ENCODE measurements at regions of chr20 and their contacts with region 1.

Region 1: DNA sequence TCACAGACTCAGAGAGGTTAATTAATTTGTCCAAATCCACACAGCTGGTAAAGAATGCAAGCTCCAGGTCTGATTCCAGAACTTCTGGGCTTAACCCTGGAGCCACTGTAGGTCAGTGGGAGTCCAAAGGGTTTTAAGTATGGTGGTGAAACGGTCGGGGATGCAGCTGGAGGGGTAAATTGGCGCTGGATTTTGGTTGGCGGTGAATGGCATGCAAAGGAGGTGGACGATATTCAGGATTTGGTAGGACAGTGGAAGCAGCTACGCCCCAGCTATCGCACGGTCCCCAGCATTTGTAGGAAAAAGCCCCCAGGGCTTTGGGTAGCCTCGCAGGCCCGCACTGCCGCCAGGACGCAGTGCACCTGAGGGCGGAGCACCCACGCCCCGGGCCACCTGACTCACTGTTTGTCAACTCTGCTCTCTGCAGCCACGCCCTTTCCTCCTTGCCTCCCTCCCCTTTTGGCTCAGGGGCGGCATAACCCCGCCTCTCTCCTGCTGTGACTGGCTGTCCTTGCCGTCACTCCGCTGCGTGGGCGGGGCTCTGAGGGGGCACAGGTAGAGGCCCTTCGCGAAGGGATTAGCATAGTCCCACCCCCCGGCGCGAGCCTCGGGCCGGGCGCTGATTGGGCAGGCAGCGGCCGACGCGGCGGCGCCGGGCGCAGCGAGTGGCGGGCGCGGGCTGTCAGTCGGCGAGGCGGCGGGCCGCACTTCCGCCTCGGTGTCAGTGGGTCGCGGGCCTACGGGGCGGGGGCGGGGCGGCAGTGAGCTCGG is at the start of gene OSBPL2:
- DNase-seq: peak; percentile 100
- H3K4me3 Mint-ChIP-seq: peak within 1 kb of the TSS; percentile 78
- H3K27ac Mint-ChIP-seq: peak within 1 kb of the TSS; percentile 60
- H3K4me1 Mint-ChIP-seq: peaks cover 17% of the 10 kb centered on the region
- H3K27me3 Mint-ChIP-seq: no peaks in the 10 kb centered on the region
- total RNA-seq, gene OSBPL2: 29.3 and 29.9 TPM in 2 replicates

Region 2: GRCh38 chr20:62182613-62183425 is 55.2 kb before region 1 on chr20 and contains the start of gene MTG2:
- intact Hi-C with region 1: loop called (anchors 2 kb)
- DNase-seq: peak; percentile 93
- H3K4me3 Mint-ChIP-seq: peak within 1 kb of the TSS; percentile 91
- H3K27ac Mint-ChIP-seq: peak within 1 kb of the TSS; percentile 89
- H3K4me1 Mint-ChIP-seq: peaks cover 24% of the 10 kb centered on the region
- H3K27me3 Mint-ChIP-seq: no peaks in the 10 kb centered on the region
- total RNA-seq, gene MTG2: 34.0 and 40.2 TPM in 2 replicates

Region 3: DNA sequence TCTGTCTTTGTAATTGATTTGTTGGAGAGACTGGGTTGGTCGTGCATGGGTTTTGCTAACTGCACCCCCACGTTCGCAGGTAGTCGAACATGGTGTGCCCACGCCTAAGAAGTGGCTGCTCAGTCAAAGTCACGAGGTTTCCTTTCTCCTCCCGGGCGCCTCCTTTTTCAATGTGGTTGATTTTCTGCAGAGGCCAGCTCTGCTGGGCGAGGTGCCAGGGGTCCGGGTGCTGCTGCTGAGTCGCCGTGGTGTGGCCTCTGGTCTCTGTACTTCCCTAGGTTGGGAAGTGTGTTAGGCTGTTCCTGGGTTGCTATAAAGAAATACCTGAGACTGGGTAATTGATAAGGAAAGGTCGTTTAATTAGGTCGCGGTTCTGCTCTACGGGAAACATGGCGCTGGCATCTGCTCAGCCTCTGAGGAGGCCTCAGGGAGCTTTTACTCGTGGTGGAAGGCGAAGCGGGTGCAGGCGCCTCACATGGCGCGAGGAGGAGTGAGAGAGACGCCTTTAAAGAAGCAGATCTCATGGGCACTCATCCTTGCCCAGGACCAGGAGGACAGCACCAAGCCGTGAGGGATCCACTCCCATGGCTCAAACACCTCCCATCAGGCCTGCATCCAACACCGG is 14.5 kb after region 1 on chr20:
- intact Hi-C with region 1: no loop called
- DNase-seq: no peak
- H3K4me3 Mint-ChIP-seq: no peak overlapping the region
- H3K27ac Mint-ChIP-seq: no peak overlapping the region
- H3K4me1 Mint-ChIP-seq: peaks cover 1% of the 10 kb centered on the region
- H3K27me3 Mint-ChIP-seq: no peaks in the 10 kb centered on the region

Region 4: GRCh38 chr20:62386383-62387218 is 148.6 kb after region 1 on chr20 and contains the start of gene RPS21:
- intact Hi-C with region 1: loop called (anchors 5 kb)
- DNase-seq: peak; percentile 90
- H3K4me3 Mint-ChIP-seq: peak within 1 kb of the TSS; percentile 95
- H3K27ac Mint-ChIP-seq: peak within 1 kb of the TSS; percentile 87
- H3K4me1 Mint-ChIP-seq: peaks cover 23% of the 10 kb centered on the region
- H3K27me3 Mint-ChIP-seq: no peaks in the 10 kb centered on the region
- total RNA-seq, gene RPS21: 2,020 and 2,085 TPM in 2 replicates

Region 5: GRCh38 chr20:62461157-62461556 is 223.2 kb after region 1 on chr20:
- intact Hi-C with region 1: no loop called
- DNase-seq: no peak
- H3K4me3 Mint-ChIP-seq: no peak overlapping the region
- H3K27ac Mint-ChIP-seq: no peak overlapping the region
- H3K4me1 Mint-ChIP-seq: no peaks in the 10 kb centered on the region
- H3K27me3 Mint-ChIP-seq: peaks cover 1% of the 10 kb centered on the region

Region 6: GRCh38 chr20:63686492-63687321 is 1448.7 kb after region 1 on chr20:
- intact Hi-C with region 1: no loop called
- DNase-seq: no peak
- H3K4me3 Mint-ChIP-seq: no peak overlapping the region
- H3K27ac Mint-ChIP-seq: no peak overlapping the region
- H3K4me1 Mint-ChIP-seq: peaks cover 3% of the 10 kb centered on the region
- H3K27me3 Mint-ChIP-seq: no peaks in the 10 kb centered on the region

Measured in activated T-helper 2 cell treated with anti-CD3 and anti-CD28 coated beads, Interferon-gamma antibody, Interleukin-2, Interleukin-4, amounts not matched to agents 10 μg/mL and 5 μg/mL and 100 μg/mL, durations not matched to agents 14 hours and 24 hours and 36 hours (primary cell).